Activated naive CD4-positive, alpha-beta T cell treated with anti-CD3 and anti-CD28 coated beads for 36 hours (primary cell): ENCODE measurements at regions of chr6 and their contacts with region 1.

Region 1: DNA sequence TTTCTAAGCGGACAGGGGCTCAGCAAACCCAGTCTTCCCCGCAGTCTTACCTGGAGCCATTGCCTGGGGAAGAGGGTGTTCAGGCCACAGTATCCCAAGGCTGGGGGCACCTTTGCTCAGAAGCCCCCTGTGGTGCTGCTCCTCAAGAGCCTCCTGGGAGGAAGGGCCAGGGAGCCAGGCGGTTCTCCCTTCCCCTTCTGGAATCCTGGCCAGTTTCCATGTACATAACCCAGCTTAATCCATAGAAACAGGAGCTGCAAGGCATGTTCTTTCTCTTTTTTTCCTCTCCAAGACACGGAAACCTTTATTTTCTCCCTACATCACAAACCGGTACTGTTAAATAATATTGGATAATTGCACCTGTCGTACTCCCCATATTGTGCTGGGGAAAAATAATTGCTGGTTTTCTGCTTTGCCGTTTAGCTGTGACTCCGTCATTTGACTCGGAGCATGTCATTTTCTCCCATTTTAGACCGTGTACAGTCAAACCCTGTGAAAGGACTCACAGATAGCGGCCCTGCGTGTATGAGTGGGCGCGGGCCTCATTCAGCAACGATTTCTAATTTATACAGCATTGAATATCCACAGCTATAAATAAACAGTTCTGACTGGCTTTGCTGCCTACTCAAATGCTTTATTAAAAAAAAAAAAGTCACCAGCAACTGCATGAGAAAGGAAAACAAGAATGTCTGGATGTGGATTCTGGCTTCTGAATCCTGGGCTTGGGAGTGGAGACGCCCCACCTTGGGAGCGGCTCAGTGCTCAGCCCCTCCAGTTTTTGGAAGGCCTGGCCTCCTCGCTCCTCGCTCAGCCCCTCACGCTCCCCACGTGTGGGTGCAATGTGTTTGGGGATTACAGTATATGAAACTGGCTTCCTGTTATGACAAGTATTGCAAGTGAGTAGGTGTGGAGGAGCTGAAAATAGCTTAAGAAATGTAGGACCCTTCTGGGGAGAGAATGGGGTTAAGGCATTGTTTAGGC is 67.3 kb downstream of the ADTRP start:
- DNase-seq: peak; percentile 79
- H3K4me3 Mint-ChIP-seq: peak overlapping the region; percentile 57
- H3K27ac Mint-ChIP-seq: peak overlapping the region; percentile 97
- H3K4me1 Mint-ChIP-seq: peaks cover 79% of the 10 kb centered on the region
- H3K27me3 Mint-ChIP-seq: no peaks in the 10 kb centered on the region

Region 2: DNA sequence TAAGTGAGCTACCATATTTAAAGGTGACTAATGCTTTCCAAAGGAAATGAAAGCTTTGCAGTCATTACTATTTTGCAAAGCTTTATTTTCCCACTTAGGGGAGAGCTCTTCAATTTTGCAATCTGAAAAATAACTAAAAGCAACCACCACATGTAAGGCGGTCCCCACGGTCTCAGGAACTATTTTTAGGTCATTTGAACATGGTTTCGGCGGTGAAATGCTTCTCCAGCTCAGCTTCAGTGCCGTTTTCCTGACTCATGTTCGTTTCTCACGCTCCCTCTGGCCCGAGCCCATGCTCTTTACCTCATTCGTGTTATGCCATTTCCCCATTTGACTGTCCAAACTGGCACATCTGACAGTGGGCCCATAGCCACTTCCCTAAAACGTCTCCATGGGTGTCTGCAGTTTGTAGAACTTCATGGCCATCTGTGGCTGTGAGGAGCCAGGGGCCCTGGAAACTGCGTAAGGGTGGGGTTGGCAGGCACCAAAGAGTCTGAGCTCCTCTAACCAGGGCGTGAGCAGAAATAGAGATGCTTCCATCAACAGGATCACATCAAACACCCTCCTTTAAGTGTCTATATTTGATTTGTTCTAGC is 20.8 kb after region 1 on chr6:
- CTCF ChIA-PET with region 1: interaction called, 16 read pairs
- intact Hi-C with region 1: loop called (anchors 1 kb)
- DNase-seq: peak; percentile 87
- H3K4me3 Mint-ChIP-seq: peak overlapping the region; percentile 3
- H3K27ac Mint-ChIP-seq: peak overlapping the region; percentile 92
- H3K4me1 Mint-ChIP-seq: peaks cover 63% of the 10 kb centered on the region
- H3K27me3 Mint-ChIP-seq: no peaks in the 10 kb centered on the region

Region 3: DNA sequence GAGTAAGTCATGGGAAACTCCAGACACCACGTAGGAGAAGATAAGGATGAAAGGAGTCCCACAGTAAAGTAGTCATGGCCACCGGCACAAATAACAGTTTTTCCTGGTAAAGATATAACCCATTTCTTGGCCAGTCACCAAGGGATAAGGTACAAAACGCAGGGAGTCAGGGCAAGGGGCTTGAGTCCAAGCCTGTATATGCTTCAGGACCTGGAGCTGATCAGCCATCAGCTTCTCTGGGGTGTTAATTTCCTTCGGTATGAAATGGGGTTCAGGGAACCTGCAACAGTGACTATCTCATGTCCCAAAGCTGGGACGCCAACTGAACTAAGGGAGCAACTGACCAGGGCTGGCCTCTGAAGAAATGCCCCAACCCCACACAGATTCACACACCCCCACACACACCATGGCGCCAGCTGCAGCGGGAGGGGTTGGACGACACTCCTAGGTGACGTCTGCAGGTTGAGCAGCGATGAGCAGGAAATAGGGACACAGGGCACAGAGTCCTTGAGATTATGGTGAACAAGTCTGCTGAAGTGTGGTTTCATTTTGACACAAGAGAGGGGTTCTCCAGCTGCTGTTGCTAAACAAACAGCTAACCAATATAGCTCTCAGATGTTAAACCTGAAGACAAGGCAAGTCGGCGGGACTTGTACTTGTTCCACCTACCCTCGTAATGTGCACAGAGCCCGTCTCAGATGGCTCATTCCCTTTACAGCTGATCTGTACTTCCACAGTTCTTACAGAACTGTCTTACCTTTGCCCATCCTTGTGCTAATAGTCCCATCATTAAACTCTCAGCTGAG is 74.7 kb after region 1 on chr6:
- CTCF ChIA-PET with region 1: no interaction called
- intact Hi-C with region 1: loop called (anchors 1 kb)
- DNase-seq: peak; percentile 62
- H3K4me3 Mint-ChIP-seq: no peak overlapping the region
- H3K27ac Mint-ChIP-seq: peak overlapping the region; percentile 23
- H3K4me1 Mint-ChIP-seq: peaks cover 7% of the 10 kb centered on the region
- H3K27me3 Mint-ChIP-seq: no peaks in the 10 kb centered on the region

Region 4: GRCh38 chr6:12011276-12012076 is 300.2 kb after region 1 on chr6:
- CTCF ChIA-PET with region 1: interaction called, 4 read pairs
- intact Hi-C with region 1: loop called (anchors 1 kb)
- DNase-seq: peak; percentile 98
- H3K4me3 Mint-ChIP-seq: peak overlapping the region; percentile 89
- H3K27ac Mint-ChIP-seq: peak overlapping the region; percentile 53
- H3K4me1 Mint-ChIP-seq: peaks cover 49% of the 10 kb centered on the region
- H3K27me3 Mint-ChIP-seq: no peaks in the 10 kb centered on the region

Region 5: DNA sequence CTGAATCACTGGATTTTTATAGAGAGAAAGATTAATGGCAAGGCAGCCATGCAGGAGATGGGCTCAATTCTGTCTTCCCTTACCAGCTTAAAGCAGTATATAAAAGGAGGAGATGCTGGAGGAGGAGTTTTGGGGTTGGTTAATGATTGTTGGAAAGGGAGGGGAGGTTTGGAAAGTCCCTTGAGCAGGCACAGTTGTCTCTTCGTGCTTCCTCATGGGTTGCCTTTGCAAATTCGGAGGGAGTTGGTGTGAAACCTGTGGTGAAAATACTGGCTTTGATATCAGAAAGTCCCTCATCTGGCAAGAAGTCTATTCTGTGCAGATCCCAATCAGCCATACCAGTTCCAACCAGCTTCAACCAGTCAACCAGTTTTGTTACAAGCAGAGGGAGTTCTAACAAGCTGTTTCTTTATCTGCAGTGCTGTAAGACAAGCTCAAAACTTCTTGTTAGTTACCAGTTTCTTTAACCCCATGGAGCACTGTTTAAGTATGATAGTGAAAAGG is 407.8 kb after region 1 on chr6:
- CTCF ChIA-PET with region 1: no interaction called
- intact Hi-C with region 1: loop called (anchors 1 kb)
- DNase-seq: peak; percentile 73
- H3K4me3 Mint-ChIP-seq: peak overlapping the region; percentile 11
- H3K27ac Mint-ChIP-seq: peak overlapping the region; percentile 77
- H3K4me1 Mint-ChIP-seq: peaks cover 49% of the 10 kb centered on the region
- H3K27me3 Mint-ChIP-seq: no peaks in the 10 kb centered on the region